ENCODE measurements at regions of chr1 and their contacts with region 1.

Region 1: DNA sequence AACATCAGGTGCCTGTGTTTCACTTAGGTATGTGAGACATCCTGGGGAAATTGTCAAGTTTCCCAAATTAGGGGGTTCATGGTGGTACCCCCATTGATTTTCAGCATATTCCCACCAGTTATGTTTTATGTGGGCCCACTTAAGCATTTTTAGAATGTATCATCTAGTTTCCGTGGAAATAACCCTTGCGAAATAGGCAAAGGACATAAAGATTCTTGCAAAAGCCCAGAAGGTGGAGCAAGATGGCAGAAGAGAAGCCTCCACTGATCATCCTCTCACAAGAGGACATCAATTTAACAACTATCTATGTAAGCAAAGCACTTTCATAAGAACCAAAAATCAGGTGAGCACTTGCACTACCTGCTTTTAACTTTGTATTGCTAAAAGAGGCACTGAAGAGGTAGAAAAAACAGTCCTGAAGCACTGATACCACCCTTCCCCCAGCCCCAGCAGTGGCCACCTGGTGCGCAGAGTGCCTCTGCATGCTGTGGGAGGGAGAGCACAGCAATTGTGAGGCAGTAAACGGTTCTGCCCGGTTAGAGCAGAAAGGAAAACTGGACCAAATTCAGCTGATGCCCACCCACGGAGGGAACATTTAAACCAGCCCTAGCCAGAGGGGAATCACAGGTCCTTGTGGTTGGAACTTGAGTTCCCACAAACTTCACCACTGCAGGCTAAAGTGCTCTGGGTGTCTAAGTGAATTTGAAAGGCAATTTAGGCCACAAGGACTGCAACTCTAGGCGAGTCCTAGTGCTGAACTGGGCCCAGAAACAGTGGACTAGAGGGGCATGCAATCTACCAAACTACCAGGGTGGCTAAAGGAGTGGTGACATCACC is 23.2 kb downstream of the MCOLN2 start:
- DNase-seq: no peak
- H3K4me3 Mint-ChIP-seq: peak overlapping the region; percentile 15
- H3K27ac Mint-ChIP-seq: peak overlapping the region; percentile 87
- H3K4me1 Mint-ChIP-seq: peaks cover 79% of the 10 kb centered on the region
- H3K27me3 Mint-ChIP-seq: no peaks in the 10 kb centered on the region

Region 2: DNA sequence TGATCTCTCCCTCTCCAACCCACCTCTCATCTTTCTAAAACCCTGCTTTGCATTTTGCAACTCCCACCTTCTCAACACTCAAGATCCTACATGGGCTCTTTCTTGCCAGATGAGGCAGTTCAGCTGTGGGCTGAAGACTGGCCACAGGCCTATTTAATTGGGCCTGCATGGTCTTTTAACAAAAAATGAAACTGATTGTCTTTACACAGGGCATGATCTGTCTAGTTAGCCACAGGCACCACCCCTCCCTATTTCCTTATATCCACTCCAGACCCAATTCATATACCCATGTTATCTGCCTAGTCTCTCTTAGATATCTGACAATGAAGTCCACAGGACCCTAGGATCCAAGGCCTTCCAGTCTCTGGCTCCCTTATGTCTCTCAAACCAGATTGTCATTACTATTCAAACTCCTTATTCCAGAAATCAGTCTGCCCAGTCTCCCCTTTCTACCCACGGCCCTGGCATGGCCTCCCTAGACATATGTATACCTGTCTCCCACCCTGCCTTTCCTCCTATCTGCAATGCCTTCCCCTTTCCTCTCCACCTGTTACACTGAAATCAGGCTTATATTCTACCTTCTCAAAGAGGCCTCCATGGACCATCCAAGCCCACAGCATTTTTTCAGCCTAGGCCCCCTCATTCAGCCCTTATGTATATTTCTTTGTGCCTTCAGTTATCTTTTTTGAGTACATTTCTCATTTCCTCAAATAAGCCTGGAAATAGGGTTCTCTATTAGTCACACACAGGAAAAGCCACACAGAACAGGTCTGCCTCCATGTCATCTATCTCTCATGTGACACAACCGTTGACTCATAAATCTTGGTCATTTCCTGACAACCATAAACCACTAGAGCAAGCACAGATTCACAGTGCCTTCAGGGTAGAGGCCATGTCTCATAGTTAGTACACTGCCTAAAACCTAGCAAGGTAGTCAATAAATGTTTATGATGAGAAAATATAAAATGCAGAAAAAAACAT is 119.7 kb before region 1 on chr1:
- intact Hi-C with region 1: loop called (anchors 10 kb)
- DNase-seq: peak; percentile 45
- H3K4me3 Mint-ChIP-seq: no peak overlapping the region
- H3K27ac Mint-ChIP-seq: peak overlapping the region; percentile 33
- H3K4me1 Mint-ChIP-seq: peaks cover 31% of the 10 kb centered on the region
- H3K27me3 Mint-ChIP-seq: peaks cover 17% of the 10 kb centered on the region

Region 3: DNA sequence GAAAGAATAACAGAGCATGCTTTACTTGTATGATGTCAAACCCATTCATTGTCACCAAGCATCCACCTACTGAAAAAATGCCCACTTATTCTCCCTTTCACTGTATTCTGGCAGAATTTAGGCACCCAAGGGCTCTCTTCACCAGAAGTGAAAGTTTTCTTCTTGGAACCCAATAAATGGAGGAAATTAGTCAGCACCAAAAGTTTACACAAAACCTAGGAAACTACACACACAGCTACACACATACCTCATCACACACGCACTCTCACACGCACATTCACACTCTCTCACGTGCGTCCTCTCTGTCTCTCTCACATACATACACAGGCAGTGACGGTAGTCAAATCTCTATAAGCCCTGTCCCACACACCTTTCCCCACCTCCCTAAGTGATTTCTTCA is 14.4 kb before region 1 on chr1:
- intact Hi-C with region 1: loop called (anchors 1 kb)
- DNase-seq: peak; percentile 51
- H3K4me3 Mint-ChIP-seq: no peak overlapping the region
- H3K27ac Mint-ChIP-seq: peak overlapping the region; percentile 75
- H3K4me1 Mint-ChIP-seq: peaks cover 36% of the 10 kb centered on the region
- H3K27me3 Mint-ChIP-seq: no peaks in the 10 kb centered on the region

Region 4: DNA sequence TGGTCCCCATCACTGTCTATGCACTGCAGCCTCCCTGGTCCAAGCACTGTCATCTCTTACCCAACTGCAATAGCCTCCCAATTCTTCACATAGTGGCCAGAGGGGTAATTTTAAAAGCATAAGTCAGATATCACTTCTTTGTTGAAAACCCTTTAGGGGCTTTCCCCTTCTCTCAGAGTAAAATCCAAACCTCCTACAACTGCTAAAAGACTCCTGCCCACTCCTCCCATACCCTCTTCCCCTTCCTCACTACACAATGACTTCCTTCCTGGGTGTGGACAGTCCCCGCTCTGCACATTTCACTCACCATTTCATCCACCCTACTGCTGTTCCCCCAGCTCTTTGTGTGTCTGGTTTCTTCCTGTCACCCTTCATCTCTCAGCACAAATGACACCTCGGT is 14.9 kb after region 1 on chr1:
- intact Hi-C with region 1: loop called (anchors 1 kb)
- DNase-seq: no peak
- H3K4me3 Mint-ChIP-seq: peak overlapping the region; percentile 38
- H3K27ac Mint-ChIP-seq: peak overlapping the region; percentile 71
- H3K4me1 Mint-ChIP-seq: peaks cover 59% of the 10 kb centered on the region
- H3K27me3 Mint-ChIP-seq: no peaks in the 10 kb centered on the region

Region 5: GRCh38 chr1:85027242-85027983 is 53.7 kb after region 1 on chr1:
- intact Hi-C with region 1: loop called (anchors 2 kb)
- DNase-seq: no peak
- H3K4me3 Mint-ChIP-seq: no peak overlapping the region
- H3K27ac Mint-ChIP-seq: no peak overlapping the region
- H3K4me1 Mint-ChIP-seq: peaks cover 11% of the 10 kb centered on the region
- H3K27me3 Mint-ChIP-seq: no peaks in the 10 kb centered on the region